ENCODE measurements at regions of chrX and their contacts with region 1.

Region 1: GRCh38 chrX:102899940-102900916 is 36.8 kb upstream of the RAB40AL start:
- DNase-seq: peak in 4 of 5 donors; percentile 10 to 53 (median 34)
- ATAC-seq: peak in 3 of 4 donors; percentile 37 to 64 (median 63)
- H3K4me3 ChIP-seq: no peak overlapping the region
- H3K27ac ChIP-seq: no peak overlapping the region
- H3K4me1 ChIP-seq: peaks cover 0 to 5% (median 0%) of the 10 kb centered on the region in 12 donors
- H3K27me3 ChIP-seq: no peaks in the 10 kb centered on the region
- CTCF ChIP-seq: peak; percentile 48 to 74 (median 58)
- POLR2A ChIP-seq: no peak

Region 2: GRCh38 chrX:102067966-102068708 is 832.1 kb before region 1 on chrX:
- intact Hi-C with region 1: loop called in 1 of 10 experiments (anchors 5 kb)
- DNase-seq: no peak
- ATAC-seq: no peak
- H3K4me3 ChIP-seq: no peak overlapping the region
- H3K27ac ChIP-seq: no peak overlapping the region
- H3K4me1 ChIP-seq: no peaks in the 10 kb centered on the region
- H3K27me3 ChIP-seq: peaks cover 0 to 6% (median 0%) of the 10 kb centered on the region in 9 donors
- CTCF ChIP-seq: peak; percentile 6 to 58 (median 46)
- POLR2A ChIP-seq: no peak